Caco-2 (cell line): ENCODE measurements at regions of chr17 and their contacts with region 1.

Region 1: GRCh38 chr17:77140166-77140878 is 447 bp upstream of the SEC14L1 start:
- DNase-seq: peak; percentile 99
- H3K4me3 ChIP-seq: peak overlapping the region; percentile 77
- H3K4me3 Mint-ChIP-seq: peak overlapping the region; percentile 73
- H3K27ac Mint-ChIP-seq: peak overlapping the region; percentile 67
- H3K4me1 ChIP-seq: peaks cover 14% of the 10 kb centered on the region
- H3K4me1 Mint-ChIP-seq: peaks cover 18% of the 10 kb centered on the region
- H3K27me3 ChIP-seq: no peaks in the 10 kb centered on the region
- H3K27me3 Mint-ChIP-seq: no peaks in the 10 kb centered on the region
- CTCF ChIP-seq: no peak

Region 2: GRCh38 chr17:77049440-77049839 is 90.9 kb before region 1 on chr17:
- CTCF ChIA-PET with region 1: no interaction called
- POLR2A ChIA-PET with region 1: no interaction called
- intact Hi-C with region 1: no loop called
- DNase-seq: no peak
- H3K4me3 ChIP-seq: no peak overlapping the region
- H3K4me3 Mint-ChIP-seq: no peak overlapping the region
- H3K27ac Mint-ChIP-seq: no peak overlapping the region
- H3K4me1 ChIP-seq: no peaks in the 10 kb centered on the region
- H3K4me1 Mint-ChIP-seq: no peaks in the 10 kb centered on the region
- H3K27me3 ChIP-seq: no peaks in the 10 kb centered on the region
- H3K27me3 Mint-ChIP-seq: no peaks in the 10 kb centered on the region
- CTCF ChIP-seq: peak in 1 of 2 experiments; percentile 22

Region 3: DNA sequence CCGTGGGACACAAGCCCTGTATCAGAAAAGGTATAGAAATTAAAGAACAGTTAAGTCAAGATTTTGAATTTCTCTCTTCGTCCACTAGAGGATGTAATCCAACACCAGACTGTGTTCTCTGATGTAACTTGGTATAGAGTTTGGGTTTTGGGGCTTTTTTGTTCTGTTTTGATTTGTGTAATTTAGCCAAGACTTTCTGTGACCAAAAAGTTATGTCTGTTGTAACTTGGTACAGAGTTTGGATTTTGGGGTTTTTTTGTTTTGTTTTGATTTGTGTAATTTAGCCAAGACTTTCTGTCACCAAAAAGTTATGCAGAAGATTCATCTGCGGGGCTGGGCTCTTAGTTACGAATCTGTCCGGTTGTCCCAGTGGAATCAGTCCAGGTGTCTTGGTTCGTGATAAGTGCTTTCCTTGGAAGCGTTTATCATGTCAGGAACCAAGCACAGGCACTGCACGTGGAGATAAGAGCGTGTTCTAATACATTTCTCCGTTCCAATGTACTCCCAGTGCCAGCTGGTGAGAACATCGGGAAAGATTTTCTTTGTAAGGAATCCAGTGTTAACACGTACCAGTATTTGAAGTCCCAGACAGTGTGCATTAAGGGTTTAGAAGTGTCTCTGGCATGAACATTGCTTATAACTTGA is 43.6 kb before region 1 on chr17:
- CTCF ChIA-PET with region 1: interaction called, 4 read pairs
- POLR2A ChIA-PET with region 1: interaction called, 6 read pairs
- intact Hi-C with region 1: loop called (anchors 2 kb)
- DNase-seq: no peak
- H3K4me3 ChIP-seq: no peak overlapping the region
- H3K4me3 Mint-ChIP-seq: no peak overlapping the region
- H3K27ac Mint-ChIP-seq: peak overlapping the region; percentile 25
- H3K4me1 ChIP-seq: peaks cover 7% of the 10 kb centered on the region
- H3K4me1 Mint-ChIP-seq: peaks cover 17% of the 10 kb centered on the region
- H3K27me3 ChIP-seq: no peaks in the 10 kb centered on the region
- H3K27me3 Mint-ChIP-seq: no peaks in the 10 kb centered on the region
- CTCF ChIP-seq: peak; percentile 60 to 87

Region 4: DNA sequence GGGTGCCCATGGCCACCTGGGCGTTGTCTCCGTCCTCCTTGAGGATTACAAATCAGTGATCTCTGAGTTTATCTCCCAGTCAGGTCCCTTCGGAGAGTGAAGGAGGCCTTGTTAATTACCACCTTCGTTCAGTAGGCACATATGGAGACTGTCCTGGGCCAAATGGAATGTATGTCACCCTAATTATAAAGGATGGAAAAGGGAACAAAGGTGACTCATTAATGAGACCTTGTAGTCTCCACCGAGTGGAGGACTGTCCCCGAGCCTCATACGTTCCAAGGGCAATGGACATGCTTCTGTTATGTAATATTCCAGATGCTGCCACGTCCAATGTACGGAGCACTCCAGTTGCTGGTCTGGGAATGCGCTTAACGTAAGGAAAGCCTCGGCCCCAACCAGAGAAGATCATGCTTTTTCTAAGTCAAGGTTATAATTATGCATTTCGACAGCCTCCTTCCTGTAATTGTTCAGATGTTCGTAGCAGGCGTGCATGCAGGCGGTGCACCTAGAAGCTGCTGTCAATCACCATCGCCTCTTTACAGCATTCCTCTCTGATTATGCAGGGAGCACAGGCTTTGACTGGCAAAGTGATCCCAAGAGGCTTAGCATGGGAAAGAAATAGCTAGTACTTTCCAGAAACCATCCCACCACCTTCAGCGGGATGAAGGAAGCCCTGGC is 21.9 kb before region 1 on chr17:
- CTCF ChIA-PET with region 1: interaction called, 6 read pairs
- POLR2A ChIA-PET with region 1: interaction called, 13 read pairs
- intact Hi-C with region 1: loop called (anchors 1 kb)
- DNase-seq: no peak
- H3K4me3 ChIP-seq: no peak overlapping the region
- H3K4me3 Mint-ChIP-seq: no peak overlapping the region
- H3K27ac Mint-ChIP-seq: peak overlapping the region; percentile 87
- H3K4me1 ChIP-seq: peaks cover 65% of the 10 kb centered on the region
- H3K4me1 Mint-ChIP-seq: peaks cover 41% of the 10 kb centered on the region
- H3K27me3 ChIP-seq: no peaks in the 10 kb centered on the region
- H3K27me3 Mint-ChIP-seq: no peaks in the 10 kb centered on the region
- CTCF ChIP-seq: no peak

Region 5: GRCh38 chr17:77208217-77208808 is 68.0 kb after region 1 on chr17:
- CTCF ChIA-PET with region 1: interaction called, 4 read pairs
- POLR2A ChIA-PET with region 1: interaction called, 7 read pairs
- intact Hi-C with region 1: loop called (anchors 1 kb)
- DNase-seq: peak; percentile 58 to 69
- H3K4me3 ChIP-seq: no peak overlapping the region
- H3K4me3 Mint-ChIP-seq: peak overlapping the region; percentile 52
- H3K27ac Mint-ChIP-seq: peak overlapping the region; percentile 84
- H3K4me1 ChIP-seq: peaks cover 13% of the 10 kb centered on the region
- H3K4me1 Mint-ChIP-seq: peaks cover 8% of the 10 kb centered on the region
- H3K27me3 ChIP-seq: no peaks in the 10 kb centered on the region
- H3K27me3 Mint-ChIP-seq: no peaks in the 10 kb centered on the region
- CTCF ChIP-seq: peak in 1 of 2 experiments; percentile 60